ENCODE measurements at regions of chr4 and their contacts with region 1.

Region 1: DNA sequence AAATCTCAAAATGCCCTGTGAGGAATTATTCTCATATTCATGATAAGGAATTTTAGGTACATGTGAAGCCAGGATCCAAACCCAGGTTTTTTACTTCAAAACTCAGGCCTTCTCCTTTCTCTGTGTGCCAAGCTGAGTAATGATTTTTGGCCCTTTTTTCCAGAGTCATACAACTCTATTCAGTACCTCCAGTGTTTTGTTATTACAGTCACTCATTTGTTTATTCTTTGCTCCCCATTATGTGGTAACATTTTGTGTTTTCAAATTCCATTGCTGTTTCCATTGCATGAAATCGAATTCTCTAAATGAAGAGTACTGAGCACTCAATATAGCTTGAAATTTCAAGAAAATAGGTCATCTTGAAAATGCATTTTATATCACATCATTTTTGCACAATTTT is 315.4 kb downstream of the NR3C2 start:
- DNase-seq: no peak
- H3K4me3 ChIP-seq: no peak overlapping the region
- H3K27ac ChIP-seq: no peak overlapping the region
- H3K4me1 ChIP-seq: no peaks in the 10 kb centered on the region
- H3K27me3 ChIP-seq: no peaks in the 10 kb centered on the region
- CTCF ChIP-seq: no peak
- POLR2A ChIP-seq: no peak

Region 2: GRCh38 chr4:148141501-148141900 is 14.7 kb after region 1 on chr4:
- CTCF ChIA-PET with region 1: interaction called, 3 read pairs
- POLR2A ChIA-PET with region 1: no interaction called
- dilution Hi-C with region 1: no loop called
- intact Hi-C with region 1: loop called (anchors 1 kb)
- DNase-seq: no peak
- H3K4me3 ChIP-seq: no peak overlapping the region
- H3K27ac ChIP-seq: no peak overlapping the region
- H3K4me1 ChIP-seq: no peaks in the 10 kb centered on the region
- H3K27me3 ChIP-seq: no peaks in the 10 kb centered on the region
- CTCF ChIP-seq: no peak
- POLR2A ChIP-seq: no peak

Region 3: DNA sequence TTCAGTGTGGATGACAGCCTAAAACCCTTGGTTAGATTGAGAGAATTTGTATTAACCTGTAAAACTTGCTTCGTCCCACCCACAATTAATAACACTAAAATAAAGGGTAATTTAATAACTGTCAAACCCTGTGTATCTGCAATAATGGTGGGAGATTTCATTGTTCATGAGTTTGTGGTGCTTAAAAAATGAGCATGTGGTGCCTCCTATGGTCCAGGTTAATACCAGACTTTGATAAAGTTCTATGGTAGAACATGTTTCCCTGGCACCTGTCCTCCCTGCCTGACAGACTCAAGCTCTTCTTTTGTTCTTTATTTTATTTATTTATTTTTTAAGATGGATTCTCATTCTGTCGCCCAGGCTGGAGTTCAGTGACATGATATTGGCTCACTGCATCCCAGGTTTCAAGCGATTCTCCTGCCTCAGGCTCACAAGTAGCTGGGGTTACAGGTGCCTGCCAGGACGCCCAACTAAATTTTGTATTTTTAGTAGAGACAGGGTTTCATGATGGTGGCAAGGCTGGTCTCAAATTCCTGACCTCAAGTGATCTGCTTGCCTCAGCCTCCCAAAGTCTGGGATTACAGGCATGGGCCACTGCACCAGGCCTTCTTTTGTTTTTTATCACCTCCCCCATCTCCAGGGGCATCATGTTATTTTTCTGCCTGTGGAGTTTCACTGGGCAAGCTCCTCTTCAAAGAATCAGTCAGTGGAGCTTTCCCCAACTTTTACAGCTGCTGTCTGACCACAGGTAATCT is 26.2 kb after region 1 on chr4:
- CTCF ChIA-PET with region 1: no interaction called
- POLR2A ChIA-PET with region 1: no interaction called
- dilution Hi-C with region 1: no loop called
- intact Hi-C with region 1: no loop called
- DNase-seq: no peak
- H3K4me3 ChIP-seq: no peak overlapping the region
- H3K27ac ChIP-seq: no peak overlapping the region
- H3K4me1 ChIP-seq: no peaks in the 10 kb centered on the region
- H3K27me3 ChIP-seq: no peaks in the 10 kb centered on the region
- CTCF ChIP-seq: no peak
- POLR2A ChIP-seq: no peak

Region 4: DNA sequence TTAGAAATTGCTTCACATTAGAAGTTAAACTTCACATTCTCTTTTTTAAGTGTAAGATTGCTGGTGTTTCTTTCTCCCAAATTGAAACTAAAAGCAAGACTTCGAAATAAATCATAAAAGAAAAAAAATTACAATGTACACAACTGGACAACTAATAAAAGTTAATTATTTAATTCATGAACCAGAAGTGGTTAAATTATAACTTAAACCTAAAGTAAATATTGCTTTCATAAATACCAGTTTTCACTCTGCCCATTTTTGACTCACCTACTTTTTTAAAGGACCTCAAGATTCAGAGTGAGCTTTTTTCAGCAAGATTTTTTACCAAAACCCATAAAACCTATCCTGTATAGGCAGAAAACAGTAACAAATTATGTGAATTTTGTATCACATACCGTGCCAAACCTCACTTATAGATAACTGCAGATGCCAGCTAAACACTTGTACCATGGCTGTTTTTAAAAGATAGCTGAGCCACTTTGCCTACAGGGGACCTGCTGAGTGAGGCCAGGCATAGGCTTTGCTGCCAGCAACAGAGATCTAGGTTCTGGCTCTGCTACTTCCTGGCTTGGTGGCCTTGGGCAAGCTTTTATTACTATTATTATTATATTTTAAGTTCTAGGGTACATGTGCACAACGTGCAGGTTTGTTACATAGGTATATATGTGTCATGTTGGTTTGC is 55.5 kb after region 1 on chr4:
- CTCF ChIA-PET with region 1: no interaction called
- POLR2A ChIA-PET with region 1: no interaction called
- dilution Hi-C with region 1: no loop called
- intact Hi-C with region 1: no loop called
- DNase-seq: no peak
- H3K4me3 ChIP-seq: no peak overlapping the region
- H3K27ac ChIP-seq: no peak overlapping the region
- H3K4me1 ChIP-seq: no peaks in the 10 kb centered on the region
- H3K27me3 ChIP-seq: no peaks in the 10 kb centered on the region
- CTCF ChIP-seq: no peak
- POLR2A ChIP-seq: no peak

Region 5: DNA sequence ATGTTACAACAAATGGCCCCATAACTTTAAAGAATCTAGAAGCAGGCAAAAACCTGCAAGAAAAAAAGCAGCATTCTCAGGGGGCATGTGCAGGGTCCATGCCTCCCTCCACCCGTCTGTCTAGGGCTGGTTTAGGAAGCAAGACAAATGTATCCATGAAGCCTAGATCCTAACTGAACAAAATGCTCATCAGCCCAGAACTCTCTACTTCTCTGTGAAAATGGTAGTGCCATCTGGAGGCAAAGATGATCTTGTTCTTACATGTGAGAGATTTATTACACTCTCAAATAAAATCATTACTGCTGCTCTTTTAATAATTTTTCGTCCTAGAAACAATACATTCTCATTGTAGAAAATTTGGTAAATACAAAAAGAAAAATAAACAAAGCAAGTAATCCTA is 288.7 kb after region 1 on chr4:
- CTCF ChIA-PET with region 1: no interaction called
- POLR2A ChIA-PET with region 1: no interaction called
- dilution Hi-C with region 1: no loop called
- intact Hi-C with region 1: loop called (anchors 5 kb)
- DNase-seq: peak; percentile 57
- H3K4me3 ChIP-seq: no peak overlapping the region
- H3K27ac ChIP-seq: no peak overlapping the region
- H3K4me1 ChIP-seq: no peaks in the 10 kb centered on the region
- H3K27me3 ChIP-seq: no peaks in the 10 kb centered on the region
- CTCF ChIP-seq: no peak
- POLR2A ChIP-seq: no peak

Measured in endothelial cell of umbilical vein (primary cell).